ENCODE measurements at regions of chrX and their contacts with region 1.

Region 1: GRCh38 chrX:48801280-48802088 is at the start of gene HDAC6:
- DNase-seq: peak; percentile 94
- H3K4me3 Mint-ChIP-seq: peak within 1 kb of the TSS; percentile 91
- H3K27ac Mint-ChIP-seq: peak within 1 kb of the TSS; percentile 98
- H3K4me1 Mint-ChIP-seq: peaks cover 13% of the 10 kb centered on the region
- H3K27me3 Mint-ChIP-seq: no peaks in the 10 kb centered on the region
- total RNA-seq, gene HDAC6: 44.7 and 56.4 TPM in 2 replicates

Region 2: DNA sequence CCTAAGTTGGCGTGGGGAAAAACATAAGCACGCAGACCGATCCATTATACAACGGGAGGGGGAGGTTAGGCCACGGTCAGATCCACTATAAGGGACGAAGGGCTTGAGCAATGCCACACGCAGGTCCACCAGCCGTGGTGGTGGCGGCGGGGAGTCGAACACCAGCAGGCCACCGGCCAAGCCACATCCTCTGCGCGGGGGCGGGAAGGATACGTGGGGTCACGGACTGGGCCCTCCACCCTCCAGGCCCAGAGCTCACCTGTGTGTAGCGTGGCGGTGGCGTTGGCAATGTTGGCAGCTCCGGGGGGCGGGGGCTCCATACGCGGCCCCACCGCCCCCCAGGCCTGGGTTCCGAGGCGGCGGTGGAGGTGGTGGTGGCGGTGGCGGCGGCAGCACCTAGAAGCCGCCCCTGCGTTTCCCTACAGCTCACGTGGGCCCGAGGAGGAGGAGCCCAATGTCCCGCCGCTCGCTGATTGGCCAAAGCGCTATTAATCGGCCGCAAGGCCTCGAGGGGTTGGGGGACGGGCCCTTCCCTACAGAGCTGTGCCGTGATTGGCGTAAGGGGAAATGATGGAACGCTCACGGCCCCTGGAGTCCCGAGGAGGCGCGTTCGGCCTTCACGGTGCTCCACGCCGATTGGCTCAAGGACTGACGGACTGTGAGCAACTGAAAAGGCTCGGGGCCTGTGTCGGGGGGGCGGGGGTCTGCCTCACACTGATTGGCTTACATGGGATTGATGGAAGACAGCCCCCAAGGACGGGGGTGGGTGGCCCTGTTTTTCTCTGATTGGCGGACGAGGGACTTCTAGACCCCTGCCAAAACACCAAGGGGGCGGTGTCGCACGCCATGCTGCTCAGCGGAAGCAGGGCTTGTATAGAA is 1151.1 kb before region 1 on chrX and contains the start of gene ELK1:
- intact Hi-C with region 1: loop called (anchors 10 kb)
- DNase-seq: peak; percentile 85
- H3K4me3 Mint-ChIP-seq: peak within 1 kb of the TSS; percentile 95
- H3K27ac Mint-ChIP-seq: peak within 1 kb of the TSS; percentile 96
- H3K4me1 Mint-ChIP-seq: peaks cover 66% of the 10 kb centered on the region
- H3K27me3 Mint-ChIP-seq: no peaks in the 10 kb centered on the region
- total RNA-seq, gene ELK1: 99.3 TPM in 2 replicates

Region 3: GRCh38 chrX:48597353-48598264 is 203.9 kb before region 1 on chrX and contains the start of gene WDR13:
- intact Hi-C with region 1: loop called (anchors 1 kb)
- DNase-seq: peak; percentile 87
- H3K4me3 Mint-ChIP-seq: peak within 1 kb of the TSS; percentile 88
- H3K27ac Mint-ChIP-seq: peak within 1 kb of the TSS; percentile 94
- H3K4me1 Mint-ChIP-seq: peaks cover 12% of the 10 kb centered on the region
- H3K27me3 Mint-ChIP-seq: no peaks in the 10 kb centered on the region
- total RNA-seq, gene WDR13: 36.3 and 36.5 TPM in 2 replicates

Region 4: GRCh38 chrX:48683411-48683982 is 118.0 kb before region 1 on chrX and contains the start of gene WAS:
- intact Hi-C with region 1: no loop called
- DNase-seq: peak; percentile 41
- H3K4me3 Mint-ChIP-seq: peak within 1 kb of the TSS; percentile 96
- H3K27ac Mint-ChIP-seq: peak within 1 kb of the TSS; percentile 93
- H3K4me1 Mint-ChIP-seq: peaks cover 55% of the 10 kb centered on the region
- H3K27me3 Mint-ChIP-seq: no peaks in the 10 kb centered on the region
- total RNA-seq, gene WAS: 106 and 122 TPM in 2 replicates

Region 5: DNA sequence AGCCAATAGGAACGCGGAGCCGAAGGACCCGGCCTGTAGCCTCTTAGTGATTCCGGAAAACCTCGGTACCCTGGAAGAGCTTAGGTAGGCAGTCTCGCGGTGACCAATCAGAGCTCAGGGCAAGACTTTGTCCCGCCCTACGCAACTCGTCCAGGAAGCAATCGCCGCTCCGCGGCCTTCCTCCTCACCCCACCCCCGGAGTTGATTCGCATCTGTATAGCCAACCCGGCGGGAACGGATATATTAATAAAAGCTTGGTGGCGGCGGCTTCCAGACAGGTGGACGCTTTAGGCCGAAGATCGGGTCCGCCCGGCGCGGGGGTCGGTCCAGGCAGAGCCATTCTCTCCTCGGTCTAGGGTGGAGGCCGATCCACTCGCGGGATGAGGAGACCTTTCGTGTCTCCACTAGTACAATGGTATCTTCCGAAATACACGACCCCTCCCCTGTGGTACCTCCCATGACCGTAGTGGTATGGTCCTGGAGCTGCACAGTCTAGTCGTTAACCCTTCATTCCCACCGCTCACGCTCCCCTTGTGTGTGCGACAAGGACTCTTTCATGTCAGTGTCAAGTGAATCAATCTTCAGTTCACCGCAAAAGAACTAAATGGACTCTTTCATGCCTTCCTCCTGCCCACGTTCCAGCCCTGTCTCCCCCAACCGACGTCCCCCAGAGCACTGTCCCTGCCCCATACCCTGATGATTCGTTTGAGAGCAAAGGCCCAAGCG is 64.1 kb before region 1 on chrX:
- intact Hi-C with region 1: loop called (anchors 1 kb)
- DNase-seq: peak; percentile 85
- H3K4me3 Mint-ChIP-seq: peak overlapping the region; percentile 98
- H3K27ac Mint-ChIP-seq: peak overlapping the region; percentile 98
- H3K4me1 Mint-ChIP-seq: peaks cover 23% of the 10 kb centered on the region
- H3K27me3 Mint-ChIP-seq: no peaks in the 10 kb centered on the region

Region 6: GRCh38 chrX:48937054-48937907 is 135.8 kb after region 1 on chrX:
- intact Hi-C with region 1: loop called (anchors 5 kb)
- DNase-seq: peak; percentile 85
- H3K4me3 Mint-ChIP-seq: peak overlapping the region; percentile 87
- H3K27ac Mint-ChIP-seq: peak overlapping the region; percentile 97
- H3K4me1 Mint-ChIP-seq: peaks cover 80% of the 10 kb centered on the region
- H3K27me3 Mint-ChIP-seq: no peaks in the 10 kb centered on the region

Region 7: GRCh38 chrX:49043220-49043986 is 241.9 kb after region 1 on chrX and contains the start of gene TFE3:
- intact Hi-C with region 1: loop called (anchors 1 kb)
- DNase-seq: peak; percentile 94
- H3K4me3 Mint-ChIP-seq: peak within 1 kb of the TSS; percentile 96
- H3K27ac Mint-ChIP-seq: peak within 1 kb of the TSS; percentile 95
- H3K4me1 Mint-ChIP-seq: peaks cover 39% of the 10 kb centered on the region
- H3K27me3 Mint-ChIP-seq: no peaks in the 10 kb centered on the region
- total RNA-seq, gene TFE3: 34.4 and 37.0 TPM in 2 replicates

Region 8: DNA sequence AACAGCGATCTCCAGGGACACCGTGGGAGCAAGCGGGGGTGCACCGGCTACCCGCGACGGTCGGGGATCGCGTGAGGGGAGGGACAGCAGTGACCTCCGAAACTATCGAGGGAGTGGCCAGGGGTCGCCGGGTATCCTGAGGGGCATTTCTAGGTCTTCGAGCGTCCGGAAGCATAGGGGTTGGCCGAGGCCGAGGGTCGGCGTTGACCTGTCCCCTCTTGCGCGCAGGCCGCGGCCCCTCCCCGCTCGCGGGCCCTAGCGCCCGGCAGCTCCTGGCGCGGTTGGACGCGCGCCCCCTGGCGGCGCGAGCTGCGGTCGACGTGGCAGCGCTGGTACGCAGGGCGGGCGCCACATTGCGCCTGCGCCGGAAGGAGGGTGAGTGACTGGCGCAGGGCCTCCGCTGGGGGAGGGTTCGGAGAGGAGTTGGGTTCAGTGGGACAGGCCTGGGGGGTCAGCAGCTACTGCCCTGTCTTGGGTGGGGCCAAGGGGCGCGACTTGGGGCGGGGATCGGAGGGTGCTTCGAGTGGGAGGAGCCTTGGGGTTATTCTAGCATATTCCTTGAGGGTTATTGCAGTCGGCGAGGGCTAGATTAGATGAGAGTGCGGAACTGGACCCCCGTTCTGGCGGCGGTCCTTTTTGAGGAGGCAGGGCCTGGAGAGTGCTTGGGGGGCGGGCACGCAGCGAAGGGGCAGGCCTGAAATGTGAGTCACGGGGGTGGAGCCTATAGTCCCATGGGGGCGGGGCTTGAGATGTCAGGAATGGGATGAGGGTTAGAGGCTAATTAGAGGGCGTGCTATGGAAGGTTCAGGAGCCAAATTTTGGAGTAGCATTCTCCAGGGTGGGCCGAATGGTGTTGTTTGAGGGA is 362.3 kb after region 1 on chrX:
- intact Hi-C with region 1: loop called (anchors 5 kb)
- DNase-seq: peak; percentile 77
- H3K4me3 Mint-ChIP-seq: peak overlapping the region; percentile 69
- H3K27ac Mint-ChIP-seq: peak overlapping the region; percentile 72
- H3K4me1 Mint-ChIP-seq: peaks cover 23% of the 10 kb centered on the region
- H3K27me3 Mint-ChIP-seq: peaks cover 4% of the 10 kb centered on the region

Measured in activated T-helper 1 cell treated with anti-CD3 and anti-CD28 coated beads, Interleukin-12 subunit alpha, Interleukin-12 subunit beta, Interleukin-2, Interleukin-4 antibody, amounts not matched to agents 30 ng/mL and 10 ng/mL and 1 ng/mL, durations not matched to agents 14 hours and 24 hours and 36 hours (primary cell).